Activated CD4-positive, alpha-beta T cell treated with anti-CD3 and anti-CD28 coated beads for 36 hours (primary cell): ENCODE measurements at regions of chrX and their contacts with region 1.

Region 1: GRCh38 chrX:154695911-154696675 is 42.7 kb upstream of the CTAG2 start:
- DNase-seq: peak; percentile 30
- ATAC-seq: peak; percentile 91
- H3K4me3 Mint-ChIP-seq: no peak overlapping the region
- H3K27ac Mint-ChIP-seq: peak overlapping the region; percentile 31
- H3K4me1 Mint-ChIP-seq: peaks cover 23% of the 10 kb centered on the region
- H3K27me3 Mint-ChIP-seq: no peaks in the 10 kb centered on the region

Region 2: GRCh38 chrX:154714925-154715324 is 18.8 kb after region 1 on chrX:
- CTCF ChIA-PET with region 1: interaction called, 5 read pairs
- POLR2A ChIA-PET with region 1: no interaction called
- intact Hi-C with region 1: loop called in 1 of 2 experiments (anchors 1 kb)
- DNase-seq: peak; percentile 52
- ATAC-seq: no peak
- H3K4me3 Mint-ChIP-seq: no peak overlapping the region
- H3K27ac Mint-ChIP-seq: no peak overlapping the region
- H3K4me1 Mint-ChIP-seq: peaks cover 49% of the 10 kb centered on the region
- H3K27me3 Mint-ChIP-seq: no peaks in the 10 kb centered on the region

Region 3: GRCh38 chrX:154784149-154784995 is 88.3 kb after region 1 on chrX:
- CTCF ChIA-PET with region 1: no interaction called
- POLR2A ChIA-PET with region 1: interaction called, 12 read pairs
- intact Hi-C with region 1: no loop called
- DNase-seq: no peak
- ATAC-seq: no peak
- H3K4me3 Mint-ChIP-seq: peak overlapping the region; percentile 34
- H3K27ac Mint-ChIP-seq: peak overlapping the region; percentile 59
- H3K4me1 Mint-ChIP-seq: peaks cover 17% of the 10 kb centered on the region
- H3K27me3 Mint-ChIP-seq: no peaks in the 10 kb centered on the region

Region 4: GRCh38 chrX:155645180-155645579 is 949.1 kb after region 1 on chrX:
- CTCF ChIA-PET with region 1: no interaction called
- POLR2A ChIA-PET with region 1: no interaction called
- intact Hi-C with region 1: no loop called
- DNase-seq: no peak
- ATAC-seq: peak; percentile 39
- H3K4me3 Mint-ChIP-seq: no peak overlapping the region
- H3K27ac Mint-ChIP-seq: no peak overlapping the region
- H3K4me1 Mint-ChIP-seq: no peaks in the 10 kb centered on the region
- H3K27me3 Mint-ChIP-seq: peaks cover 4% of the 10 kb centered on the region